ENCODE measurements at regions of chr1 and their contacts with region 1.

Region 1: GRCh38 chr1:157156058-157156541 is 17.9 kb upstream of the ETV3 start:
- DNase-seq: peak; percentile 61 to 74 (median 62)
- H3K4me3 ChIP-seq: no peak overlapping the region
- H3K4me3 Mint-ChIP-seq: peak overlapping the region in 5 of 8 donors; percentile 26 to 78 (median 63)
- H3K27ac ChIP-seq: no peak overlapping the region
- H3K27ac Mint-ChIP-seq: peak overlapping the region in 5 of 7 donors; percentile 49 to 83 (median 73)
- H3K4me1 ChIP-seq: peaks cover 27% of the 10 kb centered on the region
- H3K4me1 Mint-ChIP-seq: peaks cover 9 to 29% (median 19%) of the 10 kb centered on the region in 4 donors
- H3K27me3 ChIP-seq: no peaks in the 10 kb centered on the region
- H3K27me3 Mint-ChIP-seq: peaks cover 4 to 8% of the 10 kb centered on the region in 2 donors

Region 2: DNA sequence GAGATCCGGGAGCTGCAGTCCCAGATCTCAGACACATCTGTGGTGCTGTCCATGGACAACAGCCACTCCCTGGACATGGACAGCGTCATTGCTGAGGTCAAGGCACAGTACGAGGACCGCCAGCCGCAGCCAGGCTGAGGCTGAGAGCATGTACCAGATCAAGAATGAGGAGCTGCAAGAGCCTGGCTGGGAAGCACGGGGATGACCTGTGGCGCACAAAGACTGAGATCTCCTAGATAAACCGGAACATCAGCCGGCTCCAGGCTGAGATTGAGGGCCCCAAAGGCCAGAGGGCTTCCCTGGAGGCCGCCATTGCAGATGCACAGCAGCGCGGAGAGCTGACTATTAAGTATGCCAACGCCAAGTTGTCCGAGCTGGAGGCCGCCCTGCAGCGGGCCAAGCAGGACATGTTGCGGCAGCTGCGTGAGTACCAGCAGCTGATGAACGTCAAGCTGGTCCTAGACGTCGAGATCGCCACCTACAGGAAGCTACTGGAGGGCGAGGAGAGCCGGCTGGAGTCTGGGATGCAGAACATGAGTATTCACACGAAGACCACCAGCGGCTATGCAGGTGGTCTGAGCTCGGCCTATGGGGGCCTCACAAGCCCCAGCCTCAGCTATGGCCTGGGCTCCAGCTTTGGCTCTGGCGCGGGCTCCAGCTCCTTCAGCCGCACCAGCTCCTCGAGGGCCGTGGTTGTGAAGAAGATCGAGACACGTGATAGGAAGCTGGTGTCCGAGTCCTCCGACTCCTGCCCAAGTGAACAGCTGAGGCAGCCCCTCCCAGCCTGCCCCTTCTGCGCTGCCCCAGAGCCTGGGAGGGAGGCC is 81.9 kb before region 1 on chr1:
- CTCF ChIA-PET with region 1: interaction called, 18 read pairs
- POLR2A ChIA-PET with region 1: no interaction called
- intact Hi-C with region 1: no loop called
- DNase-seq: peak in 4 of 5 donors; percentile 4 to 21 (median 12)
- H3K4me3 ChIP-seq: no peak overlapping the region
- H3K4me3 Mint-ChIP-seq: peak overlapping the region in 1 of 8 donors; percentile 11
- H3K27ac ChIP-seq: no peak overlapping the region
- H3K27ac Mint-ChIP-seq: no peak overlapping the region
- H3K4me1 ChIP-seq: no peaks in the 10 kb centered on the region
- H3K4me1 Mint-ChIP-seq: peaks cover 0 to 9% (median 3%) of the 10 kb centered on the region in 4 donors
- H3K27me3 ChIP-seq: no peaks in the 10 kb centered on the region
- H3K27me3 Mint-ChIP-seq: peaks cover 19 to 29% of the 10 kb centered on the region in 2 donors

Region 3: GRCh38 chr1:157081707-157082106 is 74.4 kb before region 1 on chr1:
- CTCF ChIA-PET with region 1: interaction called, 460 read pairs
- POLR2A ChIA-PET with region 1: no interaction called
- intact Hi-C with region 1: no loop called
- DNase-seq: no peak
- H3K4me3 ChIP-seq: no peak overlapping the region
- H3K4me3 Mint-ChIP-seq: no peak overlapping the region
- H3K27ac ChIP-seq: no peak overlapping the region
- H3K27ac Mint-ChIP-seq: no peak overlapping the region
- H3K4me1 ChIP-seq: no peaks in the 10 kb centered on the region
- H3K4me1 Mint-ChIP-seq: no peaks in the 10 kb centered on the region
- H3K27me3 ChIP-seq: no peaks in the 10 kb centered on the region
- H3K27me3 Mint-ChIP-seq: peaks cover 5 to 22% of the 10 kb centered on the region in 2 donors

Region 4: DNA sequence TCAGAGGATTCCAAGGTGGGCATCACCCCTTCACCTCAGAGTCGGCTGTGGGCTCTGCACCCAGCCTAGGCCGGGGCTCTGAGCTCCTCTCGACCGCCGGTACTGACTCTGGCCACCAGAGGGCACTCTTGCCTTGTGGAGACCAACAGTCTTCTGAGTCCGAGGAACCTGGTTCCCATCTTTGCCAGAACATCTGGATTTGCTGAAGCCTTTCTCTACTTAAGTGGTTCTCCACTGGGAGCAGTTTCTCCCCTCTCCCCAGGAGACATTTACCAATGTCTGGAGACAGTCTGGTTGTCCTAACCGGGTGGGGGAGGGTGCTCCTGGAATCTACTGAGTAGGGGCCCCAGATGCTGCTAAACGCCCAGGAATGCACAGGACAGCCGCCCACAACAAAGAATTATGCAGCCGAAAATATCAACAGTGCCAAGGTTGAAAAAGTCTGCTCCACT is 65.9 kb before region 1 on chr1:
- CTCF ChIA-PET with region 1: interaction called, 460 read pairs
- POLR2A ChIA-PET with region 1: interaction called, 30 read pairs
- intact Hi-C with region 1: loop called (anchors 1 kb)
- DNase-seq: peak; percentile 74 to 81 (median 75)
- H3K4me3 ChIP-seq: no peak overlapping the region
- H3K4me3 Mint-ChIP-seq: no peak overlapping the region
- H3K27ac ChIP-seq: no peak overlapping the region
- H3K27ac Mint-ChIP-seq: no peak overlapping the region
- H3K4me1 ChIP-seq: peaks cover 5% of the 10 kb centered on the region
- H3K4me1 Mint-ChIP-seq: peaks cover 0 to 6% (median 3%) of the 10 kb centered on the region in 4 donors
- H3K27me3 ChIP-seq: no peaks in the 10 kb centered on the region
- H3K27me3 Mint-ChIP-seq: peaks cover 2% of the 10 kb centered on the region in 2 donors

Region 5: GRCh38 chr1:157138220-157139051 is 17.7 kb before region 1 on chr1 and contains the start of gene ETV3:
- CTCF ChIA-PET with region 1: interaction called, 14 read pairs
- POLR2A ChIA-PET with region 1: interaction called, 10 read pairs
- intact Hi-C with region 1: no loop called
- DNase-seq: peak; percentile 86 to 94 (median 88)
- H3K4me3 ChIP-seq: peak within 1 kb of the TSS; percentile 67 to 85
- H3K4me3 Mint-ChIP-seq: peak within 1 kb of the TSS; percentile 94 to 98 (median 96)
- H3K27ac ChIP-seq: peak within 1 kb of the TSS; percentile 92
- H3K27ac Mint-ChIP-seq: peak within 1 kb of the TSS; percentile 89 to 99 (median 98)
- H3K4me1 ChIP-seq: peaks cover 47% of the 10 kb centered on the region
- H3K4me1 Mint-ChIP-seq: peaks cover 44 to 59% (median 52%) of the 10 kb centered on the region in 4 donors
- H3K27me3 ChIP-seq: no peaks in the 10 kb centered on the region
- H3K27me3 Mint-ChIP-seq: no peaks in the 10 kb centered on the region
- total RNA-seq, gene ETV3: 30.5 to 31.8 TPM